Tibial artery (tissue), 4 donors: ENCODE measurements at regions of chr17 and their contacts with region 1.

Region 1: GRCh38 chr17:60421273-60421934 is 885 bp upstream of the CHCT1 start:
- DNase-seq: peak; percentile 67 to 85
- H3K4me3 ChIP-seq: peak overlapping the region; percentile 42 to 61
- H3K27ac ChIP-seq: peak overlapping the region; percentile 19 to 46
- H3K4me1 ChIP-seq: peaks cover 0 to 13% (median 10%) of the 10 kb centered on the region in 4 donors
- H3K27me3 ChIP-seq: no peaks in the 10 kb centered on the region
- CTCF ChIP-seq: peak; percentile 86 to 92

Region 2: DNA sequence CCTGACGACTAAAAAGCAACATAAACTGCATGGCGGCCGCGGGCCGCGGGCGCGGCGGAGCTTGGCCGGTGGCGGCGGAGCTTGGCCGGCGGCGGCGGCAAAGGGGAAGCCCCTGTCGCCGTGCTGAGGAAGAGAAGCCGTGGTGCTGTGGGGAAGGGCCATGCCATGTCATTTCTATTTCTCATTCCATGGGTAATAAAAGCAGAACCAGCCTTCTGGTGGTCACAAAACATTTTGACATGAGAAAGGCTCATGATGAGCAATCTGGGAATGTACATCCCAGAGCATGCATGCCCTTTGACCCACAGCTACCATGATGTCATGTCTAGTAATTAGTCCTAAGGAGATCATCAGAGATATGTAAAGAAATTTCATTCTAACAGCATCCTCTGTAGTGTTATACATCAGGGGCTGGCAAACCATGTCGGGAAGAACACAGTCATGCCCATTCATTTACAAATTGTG is 318.7 kb before region 1 on chr17:
- intact Hi-C with region 1: loop called (anchors 10 kb)
- DNase-seq: peak in 1 of 2 donors; percentile 25
- H3K4me3 ChIP-seq: peak overlapping the region in 1 of 2 donors; percentile 16
- H3K27ac ChIP-seq: no peak overlapping the region
- H3K4me1 ChIP-seq: no peaks in the 10 kb centered on the region
- H3K27me3 ChIP-seq: peaks cover 0 to 5% of the 10 kb centered on the region in 2 donors
- CTCF ChIP-seq: no peak